HepG2 (cell line): ENCODE measurements at regions of chr17 and their contacts with region 1.

Region 1: DNA sequence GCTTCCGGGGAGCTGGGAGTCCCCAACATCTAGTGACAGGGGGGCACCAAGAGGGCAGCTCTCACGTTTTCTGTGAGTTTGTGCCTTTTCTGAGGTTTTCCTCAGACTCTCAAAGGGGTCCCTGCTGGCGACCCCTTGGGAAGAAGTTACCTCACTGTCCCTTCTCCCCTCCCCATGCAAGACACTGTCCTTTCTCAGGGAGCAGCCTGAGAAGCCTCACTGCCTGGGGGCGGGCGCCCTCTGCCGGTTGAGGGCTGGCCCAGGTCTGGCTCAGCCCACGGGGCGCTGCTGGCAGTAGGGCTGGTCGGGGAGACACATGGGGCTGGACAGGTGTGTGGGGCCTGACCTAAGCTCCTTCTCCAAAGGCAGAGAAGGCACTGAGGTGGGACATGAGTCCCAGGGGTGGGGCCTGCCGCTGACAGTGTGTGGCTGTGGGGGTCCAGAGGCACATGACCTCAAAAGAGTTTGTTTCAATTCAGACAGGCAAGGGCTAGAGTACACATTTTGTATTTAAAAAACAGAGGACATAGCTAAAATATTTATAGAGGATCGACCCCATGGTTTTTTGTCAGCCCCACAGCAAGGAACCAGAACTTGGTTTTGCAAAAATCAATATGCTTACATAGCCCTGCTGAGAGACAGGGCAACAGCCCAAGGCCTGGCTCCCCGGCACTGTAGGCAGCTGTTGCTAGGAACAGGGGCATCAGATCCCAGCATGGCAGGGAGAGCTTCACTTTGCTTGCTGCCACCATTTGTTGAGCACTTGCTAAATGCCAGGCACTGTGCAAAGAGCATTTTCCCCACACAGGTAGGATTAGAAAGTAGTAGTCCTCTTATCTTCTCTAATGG is 18.5 kb upstream of the ALDH3A1 start:
- DNase-seq: peak; percentile 22
- ATAC-seq: peak; percentile 94
- H3K4me3 ChIP-seq: no peak overlapping the region; a peak in 1 of 6 replicates
- H3K27ac ChIP-seq: no peak overlapping the region
- H3K4me1 ChIP-seq: peaks cover 29% of the 10 kb centered on the region
- H3K27me3 ChIP-seq: peaks cover 0 to 9% of the 10 kb centered on the region in 2 experiments; a peak in 2 of 5 replicates
- CTCF ChIP-seq: peak; percentile 99
- EP300 ChIP-seq: no peak
- POLR2A ChIP-seq: no peak
- RAD21 ChIP-seq: peak; percentile 93

Region 2: DNA sequence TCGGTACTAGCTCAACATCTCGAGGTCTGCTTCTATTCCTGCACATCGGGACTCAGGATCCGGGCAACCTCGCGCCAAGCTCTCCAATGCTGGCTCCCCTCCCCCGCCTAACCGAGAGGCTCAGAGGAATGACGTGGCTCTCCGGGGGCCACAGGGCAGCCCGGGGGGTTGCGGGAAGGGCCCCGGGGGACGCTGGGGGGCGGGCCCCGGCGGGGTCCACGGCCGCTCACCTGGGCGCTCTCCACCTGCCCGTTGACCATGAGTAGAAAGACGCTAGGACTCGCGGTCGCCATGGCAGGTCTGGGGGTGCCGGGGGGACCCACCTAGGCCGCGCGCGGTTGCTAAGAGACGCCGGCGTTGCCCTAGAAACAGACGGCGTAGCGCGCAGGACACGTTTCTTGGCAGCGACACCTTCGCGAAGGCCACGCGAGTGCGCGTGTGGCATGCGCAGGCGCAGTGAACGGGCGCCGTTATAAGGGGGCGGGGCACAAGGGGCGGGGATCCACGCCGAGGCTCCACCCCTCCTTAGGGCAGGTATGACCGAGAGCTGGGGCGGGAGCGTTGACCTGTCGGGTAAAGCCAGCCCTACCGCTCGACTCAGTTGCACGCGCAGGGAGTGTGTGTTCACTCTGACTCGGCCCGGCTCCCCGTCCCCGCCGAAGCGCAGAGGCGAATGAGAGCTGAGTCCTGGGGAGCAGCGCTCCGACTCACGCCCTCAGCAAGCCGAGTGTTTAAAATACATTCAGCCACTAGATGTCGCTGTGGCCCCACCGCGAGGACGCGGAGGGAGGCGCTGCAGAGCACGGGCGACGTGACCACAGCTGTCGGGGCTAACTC is 404.2 kb before region 1 on chr17 and contains the start of gene B9D1:
- CTCF ChIA-PET with region 1: no interaction called
- POLR2A ChIA-PET with region 1: no interaction called
- in situ Hi-C with region 1: loop called (anchors 10 kb)
- intact Hi-C with region 1: no loop called
- DNase-seq: peak; percentile 77
- ATAC-seq: peak; percentile 74
- H3K4me3 ChIP-seq: peak within 1 kb of the TSS; percentile 65 to 93 (median 74)
- H3K27ac ChIP-seq: peak within 1 kb of the TSS; percentile 74
- H3K4me1 ChIP-seq: peaks cover 58% of the 10 kb centered on the region
- H3K27me3 ChIP-seq: no peaks in the 10 kb centered on the region
- CTCF ChIP-seq: peak; percentile 100
- EP300 ChIP-seq: no peak; a peak in 1 of 4 replicates
- POLR2A ChIP-seq: peak in 1 of 2 experiments; percentile 72; a peak in 3 of 4 replicates
- RAD21 ChIP-seq: peak; percentile 99
- total RNA-seq, gene B9D1: 26.2 and 27.7 TPM in 2 replicates

Region 3: GRCh38 chr17:19507775-19508576 is 258.7 kb before region 1 on chr17:
- CTCF ChIA-PET with region 1: interaction called, 19 read pairs
- POLR2A ChIA-PET with region 1: no interaction called
- in situ Hi-C with region 1: loop called (anchors 5 kb)
- intact Hi-C with region 1: loop called (anchors 2 kb)
- DNase-seq: peak; percentile 82
- ATAC-seq: peak; percentile 89
- H3K4me3 ChIP-seq: peak overlapping the region; percentile 69 to 77 (median 75)
- H3K27ac ChIP-seq: no peak overlapping the region
- H3K4me1 ChIP-seq: peaks cover 36% of the 10 kb centered on the region
- H3K27me3 ChIP-seq: peaks cover 0 to 7% of the 10 kb centered on the region in 2 experiments; a peak in 2 of 5 replicates
- CTCF ChIP-seq: peak; percentile 44; the same call in 1 of the 2 replicates
- EP300 ChIP-seq: no peak
- POLR2A ChIP-seq: no peak
- RAD21 ChIP-seq: no peak

Region 4: GRCh38 chr17:19590912-19591551 is 175.6 kb before region 1 on chr17:
- CTCF ChIA-PET with region 1: no interaction called
- POLR2A ChIA-PET with region 1: no interaction called
- in situ Hi-C with region 1: no loop called
- intact Hi-C with region 1: loop called (anchors 1 kb)
- DNase-seq: peak; percentile 10
- ATAC-seq: peak; percentile 66
- H3K4me3 ChIP-seq: no peak overlapping the region
- H3K27ac ChIP-seq: no peak overlapping the region
- H3K4me1 ChIP-seq: peaks cover 14% of the 10 kb centered on the region
- H3K27me3 ChIP-seq: no peaks in the 10 kb centered on the region
- CTCF ChIP-seq: peak; percentile 55
- EP300 ChIP-seq: no peak
- POLR2A ChIP-seq: no peak
- RAD21 ChIP-seq: no peak

Region 5: GRCh38 chr17:19703106-19703827 is 63.4 kb before region 1 on chr17:
- CTCF ChIA-PET with region 1: interaction called, 3 read pairs
- POLR2A ChIA-PET with region 1: no interaction called
- in situ Hi-C with region 1: no loop called
- intact Hi-C with region 1: loop called (anchors 2 kb)
- DNase-seq: no peak
- ATAC-seq: peak; percentile 10
- H3K4me3 ChIP-seq: peak overlapping the region in 1 of 3 experiments; percentile 65; a peak in 1 of 6 replicates
- H3K27ac ChIP-seq: no peak overlapping the region
- H3K4me1 ChIP-seq: peaks cover 60% of the 10 kb centered on the region
- H3K27me3 ChIP-seq: peaks cover 0 to 15% of the 10 kb centered on the region in 2 experiments; a peak in 4 of 5 replicates
- CTCF ChIP-seq: no peak
- EP300 ChIP-seq: no peak
- POLR2A ChIP-seq: no peak
- RAD21 ChIP-seq: no peak